T-cell (primary cell): ENCODE measurements at regions of chr14 and their contacts with region 1.

Region 1: DNA sequence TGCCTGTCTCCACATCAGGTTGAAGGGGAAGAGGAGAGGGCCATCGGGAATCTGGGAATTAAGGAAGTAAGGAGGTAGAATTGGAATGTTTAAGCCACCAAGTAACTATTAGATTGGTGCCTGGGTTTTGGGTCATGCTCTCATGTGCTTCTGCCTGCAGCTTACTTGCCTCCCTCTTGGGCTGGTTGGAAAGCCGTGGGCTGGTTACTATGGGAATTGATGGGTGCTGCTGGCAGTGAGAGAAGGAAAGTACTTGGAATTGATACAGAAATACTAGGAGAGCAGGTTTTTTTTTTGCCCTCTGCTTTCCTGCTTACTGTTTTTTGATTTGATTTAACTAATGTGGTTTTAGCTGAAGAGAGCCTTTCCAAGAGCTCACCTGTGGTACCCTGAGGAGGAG is 493.5 kb upstream of the RGS6 start:
- DNase-seq: no peak
- ATAC-seq: no peak
- H3K4me3 ChIP-seq: no peak overlapping the region
- H3K4me3 Mint-ChIP-seq: no peak overlapping the region
- H3K27ac ChIP-seq: no peak overlapping the region
- H3K27ac Mint-ChIP-seq: no peak overlapping the region
- H3K4me1 ChIP-seq: peaks cover 0 to 4% of the 10 kb centered on the region in 2 experiments
- H3K4me1 Mint-ChIP-seq: peaks cover 10 to 28% (median 16%) of the 10 kb centered on the region in 3 donors
- H3K27me3 ChIP-seq: no peaks in the 10 kb centered on the region
- H3K27me3 Mint-ChIP-seq: no peaks in the 10 kb centered on the region

Region 2: DNA sequence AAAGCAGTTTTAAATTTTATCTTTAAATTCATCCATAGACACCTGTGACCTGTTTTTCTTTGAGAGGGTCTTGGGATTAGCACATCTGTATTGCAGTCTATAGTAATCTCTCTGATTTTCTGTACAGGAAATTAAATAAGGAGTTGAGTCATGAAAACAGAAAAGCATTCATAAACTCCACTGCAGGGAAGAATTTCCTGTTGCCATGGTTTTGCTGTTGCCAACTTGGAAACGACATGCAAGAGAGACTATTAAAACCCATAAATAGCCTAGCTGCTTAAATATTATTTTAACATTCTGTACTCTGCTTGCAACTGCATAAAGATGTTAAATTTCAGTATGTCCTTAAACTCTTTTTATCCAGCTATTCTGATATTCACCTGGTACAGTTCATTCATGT is 212.5 kb after region 1 on chr14:
- CTCF ChIA-PET with region 1: no interaction called
- POLR2A ChIA-PET with region 1: interaction called in 1 of 2 experiments, 14 read pairs
- DNase-seq: no peak
- ATAC-seq: no peak
- H3K4me3 ChIP-seq: no peak overlapping the region
- H3K4me3 Mint-ChIP-seq: no peak overlapping the region
- H3K27ac ChIP-seq: no peak overlapping the region
- H3K27ac Mint-ChIP-seq: no peak overlapping the region
- H3K4me1 ChIP-seq: no peaks in the 10 kb centered on the region
- H3K4me1 Mint-ChIP-seq: no peaks in the 10 kb centered on the region
- H3K27me3 ChIP-seq: no peaks in the 10 kb centered on the region
- H3K27me3 Mint-ChIP-seq: no peaks in the 10 kb centered on the region